Heart left ventricle (tissue), 16 donors: ENCODE measurements at regions of chr6 and their contacts with region 1.

Region 1: DNA sequence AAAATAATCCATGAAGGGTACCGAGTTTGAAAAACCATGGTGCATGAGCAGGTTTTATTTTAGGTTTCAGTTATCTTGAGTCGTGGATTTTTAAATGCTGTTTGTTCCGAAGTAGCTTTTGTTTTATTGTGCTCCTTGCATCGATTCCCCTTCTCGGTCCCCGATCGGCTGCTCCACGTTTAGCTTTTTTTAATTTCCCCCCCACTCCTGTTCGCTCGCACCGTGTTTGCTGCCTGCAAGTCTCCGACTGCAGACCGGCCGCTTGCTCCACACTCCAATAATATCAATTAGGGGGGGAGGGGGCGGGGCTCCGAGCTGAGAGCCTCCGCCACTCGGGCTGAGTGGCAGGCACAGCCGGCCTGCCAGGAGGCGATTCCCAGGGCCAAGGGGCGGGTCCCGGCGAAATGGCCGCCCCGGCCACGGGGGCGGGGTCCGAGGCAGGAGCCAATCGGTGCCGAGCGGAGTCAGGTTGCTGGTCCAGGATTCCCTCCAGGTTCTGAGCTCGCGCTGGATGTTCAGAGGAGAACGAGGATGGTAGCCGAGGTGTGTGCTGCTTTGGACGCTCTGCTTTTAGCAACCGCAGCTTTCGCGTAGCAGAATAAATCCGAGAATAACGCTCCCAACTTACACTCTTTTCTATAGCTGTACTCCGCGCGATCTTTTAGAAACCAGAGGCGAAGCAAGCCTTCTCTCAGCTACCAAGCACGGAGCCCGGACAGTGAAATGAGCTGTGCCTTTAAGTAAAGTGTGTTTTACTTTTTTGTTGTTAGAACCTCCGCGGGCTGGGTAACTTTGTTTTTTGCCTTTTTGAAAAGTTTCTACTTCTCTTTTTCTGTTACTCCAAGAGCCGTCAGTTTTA is at the start of gene EPHA7:
- DNase-seq: peak; percentile 90 to 95 (median 94)
- ATAC-seq: peak; percentile 96 to 97 (median 96)
- H3K4me3 ChIP-seq: peak within 1 kb of the TSS; percentile 31 to 73 (median 60)
- H3K27ac ChIP-seq: peak within 1 kb of the TSS in 10 of 12 donors; percentile 11 to 85 (median 66)
- H3K4me1 ChIP-seq: peaks cover 0 to 30% (median 11%) of the 10 kb centered on the region in 12 donors
- H3K27me3 ChIP-seq: peaks cover 4 to 76% (median 49%) of the 10 kb centered on the region in 9 donors
- CTCF ChIP-seq: no peak
- POLR2A ChIP-seq: peak; percentile 26 to 73
- total RNA-seq, gene EPHA7: 2.1 to 12.1 (median 3.1) TPM

Region 2: DNA sequence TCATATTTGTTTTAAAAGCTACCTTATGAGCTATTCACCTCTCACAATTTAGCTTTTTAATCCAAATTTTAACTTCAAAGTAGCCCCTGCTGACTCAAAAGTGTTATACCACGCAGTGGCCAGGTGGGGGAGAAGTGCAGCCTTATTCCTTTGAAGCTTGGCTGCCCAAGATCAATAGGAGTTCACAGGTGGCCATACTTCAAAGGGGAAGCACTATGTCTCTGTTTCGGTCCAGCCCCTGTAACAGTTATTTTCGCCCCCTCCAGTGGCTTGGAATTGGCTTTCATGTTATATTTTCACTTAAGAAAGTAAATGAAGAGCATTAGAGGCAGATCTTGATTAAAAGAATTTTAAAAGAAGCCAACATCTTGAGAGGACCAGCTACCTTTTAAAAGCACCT is 608.6 kb before region 1 on chr6:
- intact Hi-C with region 1: loop called in 4 of 10 experiments (anchors 5 to 10 kb)
- DNase-seq: no peak
- ATAC-seq: peak in 1 of 4 donors; percentile 50
- H3K4me3 ChIP-seq: no peak overlapping the region
- H3K27ac ChIP-seq: no peak overlapping the region
- H3K4me1 ChIP-seq: no peaks in the 10 kb centered on the region
- H3K27me3 ChIP-seq: no peaks in the 10 kb centered on the region
- CTCF ChIP-seq: peak in 11 of 12 donors; percentile 15 to 55 (median 34)
- POLR2A ChIP-seq: no peak

Region 3: GRCh38 chr6:93036835-93037234 is 382.7 kb before region 1 on chr6:
- intact Hi-C with region 1: loop called in 2 of 10 experiments (anchors 5 kb)
- DNase-seq: no peak
- ATAC-seq: peak in 2 of 4 donors; percentile 45 to 60
- H3K4me3 ChIP-seq: no peak overlapping the region
- H3K27ac ChIP-seq: no peak overlapping the region
- H3K4me1 ChIP-seq: no peaks in the 10 kb centered on the region
- H3K27me3 ChIP-seq: no peaks in the 10 kb centered on the region
- CTCF ChIP-seq: peak in 8 of 12 donors; percentile 16 to 51 (median 33)
- POLR2A ChIP-seq: no peak

Region 4: GRCh38 chr6:93222071-93222851 is 197.3 kb before region 1 on chr6:
- intact Hi-C with region 1: loop called in 1 of 10 experiments (anchors 1 kb)
- DNase-seq: peak in 2 of 5 donors; percentile 14 to 19
- ATAC-seq: peak; percentile 99 to 100 (median 100)
- H3K4me3 ChIP-seq: no peak overlapping the region
- H3K27ac ChIP-seq: peak overlapping the region; percentile 13 to 88 (median 68)
- H3K4me1 ChIP-seq: peaks cover 0 to 14% (median 0%) of the 10 kb centered on the region in 12 donors
- H3K27me3 ChIP-seq: no peaks in the 10 kb centered on the region
- CTCF ChIP-seq: no peak
- POLR2A ChIP-seq: no peak

Region 5: DNA sequence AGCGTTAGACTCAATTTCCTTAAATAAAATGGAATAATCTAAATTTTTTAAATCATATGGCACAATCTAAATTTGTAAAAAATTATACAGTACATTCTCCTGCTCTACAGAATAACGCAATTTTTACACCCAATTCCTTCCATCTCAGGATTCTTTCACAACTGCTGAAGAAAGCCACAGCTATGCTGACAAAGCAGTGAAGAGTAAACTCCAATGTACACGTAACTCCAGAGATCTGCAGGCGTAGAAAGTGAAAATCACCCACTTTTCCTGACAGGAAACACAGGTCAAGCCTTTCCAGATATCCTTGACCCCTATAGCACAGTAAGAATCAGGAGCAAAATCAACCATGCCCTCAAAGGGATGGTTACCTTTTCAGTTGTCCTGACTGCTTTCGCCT is 27.6 kb before region 1 on chr6:
- intact Hi-C with region 1: loop called in 1 of 10 experiments (anchors 2 kb)
- DNase-seq: no peak
- ATAC-seq: no peak
- H3K4me3 ChIP-seq: no peak overlapping the region
- H3K27ac ChIP-seq: no peak overlapping the region
- H3K4me1 ChIP-seq: no peaks in the 10 kb centered on the region
- H3K27me3 ChIP-seq: no peaks in the 10 kb centered on the region
- CTCF ChIP-seq: no peak
- POLR2A ChIP-seq: no peak